Activated CD8-positive, alpha-beta T cell treated with anti-CD3 and anti-CD28 coated beads for 36 hours (primary cell): ENCODE measurements at regions of chr14 and their contacts with region 1.

Region 1: DNA sequence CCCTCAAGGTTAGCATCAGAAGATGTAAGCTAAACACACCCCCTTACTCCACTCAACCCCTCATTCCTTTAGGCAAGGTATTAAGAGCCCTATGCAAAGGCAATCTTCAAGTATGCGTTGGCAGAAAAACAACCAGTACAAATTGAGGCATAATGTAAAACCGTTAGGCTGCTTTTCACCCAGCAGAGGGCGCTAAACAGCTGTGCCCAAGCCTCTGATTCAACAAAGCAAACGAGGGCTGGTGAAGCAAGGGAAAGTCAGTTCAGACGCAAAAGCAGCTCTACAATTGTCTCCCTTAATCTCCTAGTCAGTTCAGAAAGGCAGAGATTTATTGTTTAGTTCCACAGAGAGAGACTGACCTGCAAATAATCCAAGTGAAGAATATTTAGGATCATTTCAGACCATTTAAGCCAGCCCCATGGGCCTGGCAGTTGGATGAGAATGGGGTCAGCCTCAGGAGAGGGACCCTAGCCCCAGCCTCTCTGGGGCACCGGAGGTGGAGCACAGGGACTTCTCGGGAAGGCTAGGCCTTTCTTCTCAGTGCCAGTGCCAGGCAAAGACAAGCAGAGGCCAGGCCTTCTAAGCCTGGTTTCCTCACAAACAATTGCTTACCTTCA is 23.5 kb downstream of the DCAF5 start:
- DNase-seq: peak; percentile 88
- ATAC-seq: peak; percentile 70
- H3K4me3 Mint-ChIP-seq: no peak overlapping the region
- H3K27ac Mint-ChIP-seq: peak overlapping the region; percentile 67
- H3K4me1 Mint-ChIP-seq: peaks cover 69% of the 10 kb centered on the region
- H3K27me3 Mint-ChIP-seq: no peaks in the 10 kb centered on the region
- CTCF ChIP-seq: peak; percentile 88

Region 2: GRCh38 chr14:69107407-69108003 is 21.9 kb before region 1 on chr14:
- CTCF ChIA-PET with region 1: interaction called, 20 read pairs
- POLR2A ChIA-PET with region 1: no interaction called
- intact Hi-C with region 1: no loop called
- DNase-seq: peak; percentile 46
- ATAC-seq: peak; percentile 75
- H3K4me3 Mint-ChIP-seq: no peak overlapping the region
- H3K27ac Mint-ChIP-seq: peak overlapping the region; percentile 19
- H3K4me1 Mint-ChIP-seq: peaks cover 5% of the 10 kb centered on the region
- H3K27me3 Mint-ChIP-seq: no peaks in the 10 kb centered on the region
- CTCF ChIP-seq: peak; percentile 67

Region 3: GRCh38 chr14:69117020-69117767 is 12.2 kb before region 1 on chr14:
- CTCF ChIA-PET with region 1: interaction called, 14 read pairs
- POLR2A ChIA-PET with region 1: no interaction called
- intact Hi-C with region 1: no loop called
- DNase-seq: no peak
- ATAC-seq: peak; percentile 53
- H3K4me3 Mint-ChIP-seq: no peak overlapping the region
- H3K27ac Mint-ChIP-seq: peak overlapping the region; percentile 73
- H3K4me1 Mint-ChIP-seq: peaks cover 41% of the 10 kb centered on the region
- H3K27me3 Mint-ChIP-seq: no peaks in the 10 kb centered on the region
- CTCF ChIP-seq: no peak

Region 4: GRCh38 chr14:69153131-69153872 is 23.9 kb after region 1 on chr14:
- CTCF ChIA-PET with region 1: interaction called, 218 read pairs
- POLR2A ChIA-PET with region 1: interaction called, 27 read pairs
- intact Hi-C with region 1: loop called (anchors 2 kb)
- DNase-seq: peak; percentile 95
- ATAC-seq: peak; percentile 91
- H3K4me3 Mint-ChIP-seq: peak overlapping the region; percentile 84
- H3K27ac Mint-ChIP-seq: peak overlapping the region; percentile 95
- H3K4me1 Mint-ChIP-seq: peaks cover 33% of the 10 kb centered on the region
- H3K27me3 Mint-ChIP-seq: peaks cover 2% of the 10 kb centered on the region
- CTCF ChIP-seq: no peak

Region 5: GRCh38 chr14:69191340-69192111 is 62.2 kb after region 1 on chr14 and contains the start of gene EXD2:
- CTCF ChIA-PET with region 1: interaction called, 12 read pairs
- POLR2A ChIA-PET with region 1: interaction called, 3 read pairs
- intact Hi-C with region 1: loop called (anchors 5 kb)
- DNase-seq: peak; percentile 89
- ATAC-seq: peak; percentile 88
- H3K4me3 Mint-ChIP-seq: peak within 1 kb of the TSS; percentile 90
- H3K27ac Mint-ChIP-seq: peak within 1 kb of the TSS; percentile 90
- H3K4me1 Mint-ChIP-seq: peaks cover 23% of the 10 kb centered on the region
- H3K27me3 Mint-ChIP-seq: no peaks in the 10 kb centered on the region
- CTCF ChIP-seq: no peak
- total RNA-seq, gene EXD2: 9.4 to 10.7 TPM

Region 6: DNA sequence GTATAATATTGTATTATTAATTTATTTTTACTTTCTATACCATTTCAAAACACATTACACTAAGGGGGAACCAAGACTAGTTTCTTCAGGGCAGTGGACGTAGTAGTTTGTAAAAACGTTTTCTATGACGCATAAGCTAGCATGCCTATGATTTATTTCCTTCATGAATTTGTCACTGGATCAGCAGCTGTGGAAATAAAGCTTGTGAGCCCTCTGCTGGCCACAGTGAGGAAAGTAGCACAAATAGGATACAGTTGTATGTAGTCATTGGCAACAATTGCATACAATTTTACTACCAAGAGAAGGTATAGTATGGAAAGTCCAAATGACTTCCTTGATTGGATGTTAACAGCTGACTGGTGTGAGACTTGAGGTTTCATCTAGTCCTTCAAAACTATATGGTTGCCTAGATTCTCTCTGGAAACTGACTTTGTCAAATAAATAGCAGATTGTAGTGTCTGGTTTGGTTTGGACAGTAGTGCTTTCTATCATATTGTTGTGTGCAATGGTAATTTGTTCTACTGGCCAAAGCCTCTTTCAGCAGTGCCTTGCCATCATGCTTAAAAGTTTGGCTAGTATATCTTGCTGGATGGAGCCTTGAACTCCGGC is 330.8 kb after region 1 on chr14:
- CTCF ChIA-PET with region 1: interaction called, 11 read pairs
- POLR2A ChIA-PET with region 1: no interaction called
- intact Hi-C with region 1: no loop called
- DNase-seq: peak; percentile 79
- ATAC-seq: peak; percentile 91
- H3K4me3 Mint-ChIP-seq: no peak overlapping the region
- H3K27ac Mint-ChIP-seq: no peak overlapping the region
- H3K4me1 Mint-ChIP-seq: no peaks in the 10 kb centered on the region
- H3K27me3 Mint-ChIP-seq: no peaks in the 10 kb centered on the region
- CTCF ChIP-seq: peak; percentile 77